Activated CD4-positive, alpha-beta memory T cell treated with anti-CD3 and anti-CD28 coated beads for 36 hours (primary cell): ENCODE measurements at regions of chr5 and their contacts with region 1.

Region 1: DNA sequence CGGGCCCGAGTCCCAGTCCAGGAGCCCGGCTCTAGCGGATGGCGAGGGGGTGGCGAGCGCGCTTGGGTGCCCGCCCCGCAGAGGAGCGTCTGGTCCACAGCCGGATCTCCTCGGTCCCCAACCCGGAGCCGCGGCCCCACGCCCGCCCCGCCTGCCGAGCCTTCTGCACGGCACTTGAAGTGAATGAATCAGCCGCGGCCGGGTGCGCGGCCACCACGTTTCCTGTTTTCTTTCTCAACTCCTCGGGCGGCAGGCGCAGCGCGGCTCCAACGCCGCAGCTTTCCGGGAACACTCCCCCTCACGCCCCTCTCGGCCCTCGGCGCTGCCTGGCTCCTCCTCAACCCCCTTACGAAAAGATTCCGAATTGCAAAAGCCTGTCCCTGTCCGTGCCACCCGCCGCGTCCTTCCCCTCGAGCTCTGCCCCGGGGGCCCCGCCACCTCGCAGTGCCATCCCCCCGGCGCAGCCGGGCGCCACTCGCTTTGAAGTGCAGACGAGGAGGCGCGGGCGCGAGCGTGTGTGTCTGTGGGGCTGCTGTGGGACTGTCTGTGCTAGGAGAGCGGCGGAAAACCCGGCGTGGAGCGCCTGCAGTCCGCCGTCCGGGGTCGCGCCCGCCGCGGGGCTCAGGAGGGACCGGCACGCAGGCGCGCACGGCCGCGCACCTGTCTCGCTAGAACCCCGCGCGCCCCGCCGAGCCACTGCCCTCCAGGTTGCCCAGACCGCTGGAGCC is 456.6 kb downstream of the RAB3C start:
- DNase-seq: peak; percentile 93
- H3K4me3 Mint-ChIP-seq: peak overlapping the region; percentile 82
- H3K27ac Mint-ChIP-seq: peak overlapping the region; percentile 87
- H3K4me1 Mint-ChIP-seq: peaks cover 48% of the 10 kb centered on the region
- H3K27me3 Mint-ChIP-seq: no peaks in the 10 kb centered on the region

Region 2: GRCh38 chr5:58759745-58760144 is 279.7 kb before region 1 on chr5:
- CTCF ChIA-PET with region 1: no interaction called
- POLR2A ChIA-PET with region 1: no interaction called
- intact Hi-C with region 1: loop called (anchors 10 kb)
- DNase-seq: no peak
- H3K4me3 Mint-ChIP-seq: peak overlapping the region; percentile 46
- H3K27ac Mint-ChIP-seq: no peak overlapping the region
- H3K4me1 Mint-ChIP-seq: peaks cover 36% of the 10 kb centered on the region
- H3K27me3 Mint-ChIP-seq: no peaks in the 10 kb centered on the region

Region 3: DNA sequence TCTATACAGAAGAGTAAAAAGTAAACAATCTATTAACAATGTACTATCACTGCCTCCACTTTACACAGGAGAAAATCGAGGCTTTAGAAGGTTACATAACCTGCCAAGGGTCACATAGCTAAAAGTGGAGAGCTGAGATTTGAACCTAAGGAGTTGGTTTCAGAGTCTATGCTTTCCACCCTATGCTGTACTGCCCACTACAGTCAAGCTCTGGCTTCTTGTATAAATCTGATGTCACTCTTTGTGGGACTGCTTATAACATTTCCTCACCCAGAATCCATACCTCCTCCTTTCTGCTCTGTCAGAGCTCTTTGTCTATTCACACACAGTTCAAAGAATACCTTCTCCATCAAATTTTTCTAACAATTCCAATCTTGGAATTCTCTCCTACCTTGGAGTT is 46.6 kb after region 1 on chr5:
- CTCF ChIA-PET with region 1: no interaction called
- POLR2A ChIA-PET with region 1: no interaction called
- intact Hi-C with region 1: loop called (anchors 2 kb)
- DNase-seq: no peak
- H3K4me3 Mint-ChIP-seq: no peak overlapping the region
- H3K27ac Mint-ChIP-seq: no peak overlapping the region
- H3K4me1 Mint-ChIP-seq: no peaks in the 10 kb centered on the region
- H3K27me3 Mint-ChIP-seq: peaks cover 3% of the 10 kb centered on the region

Region 4: GRCh38 chr5:59126708-59127573 is 87.5 kb after region 1 on chr5:
- CTCF ChIA-PET with region 1: interaction called, 29 read pairs
- POLR2A ChIA-PET with region 1: interaction called, 40 read pairs
- intact Hi-C with region 1: loop called (anchors 1 kb)
- DNase-seq: no peak
- H3K4me3 Mint-ChIP-seq: no peak overlapping the region
- H3K27ac Mint-ChIP-seq: no peak overlapping the region
- H3K4me1 Mint-ChIP-seq: peaks cover 15% of the 10 kb centered on the region
- H3K27me3 Mint-ChIP-seq: no peaks in the 10 kb centered on the region

Region 5: GRCh38 chr5:59367791-59368394 is 328.4 kb after region 1 on chr5:
- CTCF ChIA-PET with region 1: interaction called, 7 read pairs
- POLR2A ChIA-PET with region 1: no interaction called
- intact Hi-C with region 1: loop called (anchors 10 kb)
- DNase-seq: peak; percentile 58
- H3K4me3 Mint-ChIP-seq: no peak overlapping the region
- H3K27ac Mint-ChIP-seq: no peak overlapping the region
- H3K4me1 Mint-ChIP-seq: peaks cover 11% of the 10 kb centered on the region
- H3K27me3 Mint-ChIP-seq: peaks cover 14% of the 10 kb centered on the region